Posterior vena cava (tissue), 2 donors: ENCODE measurements at regions of chr19 and their contacts with region 1.

Region 1: DNA sequence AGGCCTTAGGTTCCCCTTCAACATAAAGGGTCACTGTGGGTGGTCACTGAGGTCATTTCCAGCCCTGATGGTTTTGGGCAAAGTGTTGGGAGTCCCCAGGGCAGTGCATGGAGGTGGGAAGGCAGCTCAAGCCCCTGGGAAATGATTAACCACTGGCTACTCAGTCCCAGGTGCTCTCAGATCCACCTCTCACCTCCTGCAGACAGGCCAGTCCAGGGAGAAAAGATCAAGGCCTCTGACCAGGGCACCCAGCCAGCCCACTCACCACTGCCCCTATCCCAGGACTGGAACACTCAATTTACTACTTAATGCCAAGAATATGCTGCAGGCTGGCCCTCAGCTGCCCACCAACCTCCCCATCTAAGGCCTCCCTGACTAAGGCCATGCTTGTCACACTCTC is 1307.9 kb downstream of the UQCRFS1 start:
- DNase-seq: no peak

Region 2: DNA sequence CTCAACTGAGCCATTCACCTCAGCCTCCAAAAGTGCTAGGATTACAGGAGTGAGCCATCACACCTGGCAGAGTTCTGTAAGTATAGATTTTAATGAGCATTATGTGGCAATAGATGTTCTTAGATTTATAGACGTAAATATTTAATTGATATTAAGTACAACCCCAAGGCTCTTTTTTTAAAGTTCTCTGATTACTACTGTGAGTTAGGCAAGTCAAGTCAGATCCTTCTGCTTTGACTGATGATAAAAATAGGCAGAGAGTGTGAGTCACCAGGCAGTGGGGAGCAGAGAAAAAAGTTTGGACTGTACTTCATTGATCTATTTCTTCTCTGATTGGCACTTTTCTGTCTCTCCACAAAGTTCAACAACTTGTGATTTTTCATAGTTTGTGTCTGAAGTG is 72.0 kb before region 1 on chr19:
- intact Hi-C with region 1: loop called in 1 of 2 experiments (anchors 2 kb)
- DNase-seq: no peak

Region 3: DNA sequence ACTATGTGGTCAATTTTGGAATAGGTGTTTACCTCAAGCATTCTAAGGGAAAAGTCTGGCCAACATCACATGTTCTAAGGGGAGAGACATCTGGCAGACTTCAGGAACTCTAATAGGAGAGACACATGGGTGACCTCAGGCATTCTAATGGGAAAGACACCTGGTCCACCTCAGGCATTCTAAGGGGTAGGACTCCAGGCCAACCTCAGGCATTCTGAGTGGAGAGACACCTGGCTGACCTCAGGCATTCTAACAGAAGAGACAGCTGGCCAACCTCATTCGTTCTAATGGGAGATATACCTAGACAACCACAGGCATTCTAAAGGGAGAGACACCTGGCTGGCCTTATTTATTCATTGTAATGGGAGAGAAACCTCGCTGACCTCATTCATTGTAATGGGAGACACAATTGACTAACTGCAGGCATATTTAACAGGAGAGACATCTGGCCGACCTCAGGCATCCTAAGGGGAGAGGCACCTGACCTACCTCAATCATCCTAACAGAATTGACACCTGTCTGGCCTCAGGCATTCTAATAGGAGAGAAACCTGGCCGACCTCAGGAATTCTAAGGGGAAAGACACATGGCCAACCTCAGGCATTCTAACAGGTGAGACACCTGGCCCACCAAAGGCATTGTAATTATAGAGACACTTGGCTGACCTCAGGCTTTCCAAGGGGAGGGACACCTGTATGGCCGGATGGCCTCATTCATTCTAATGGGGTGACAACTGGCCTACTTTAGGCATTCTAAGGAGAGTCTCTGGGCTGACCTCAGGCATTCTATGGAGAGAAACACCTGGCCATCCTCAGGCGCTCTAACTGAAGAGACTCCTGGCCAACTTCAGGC is 38.9 kb before region 1 on chr19:
- intact Hi-C with region 1: no loop called
- DNase-seq: no peak